RWPE1 (cell line): ENCODE measurements at regions of chr11 and their contacts with region 1.

Region 1: GRCh38 chr11:75422253-75423231 is 10.5 kb downstream of the KLHL35 start:
- DNase-seq: no peak
- H3K27ac ChIP-seq: 0 out of 2 replicates have a peak overlapping the region, but pooled peaks have one; percentile 17
- CTCF ChIP-seq: no peak

Region 2: GRCh38 chr11:75408852-75409219 is 13.7 kb before region 1 on chr11:
- CTCF ChIA-PET with region 1: interaction called, 11 read pairs
- POLR2A ChIA-PET with region 1: no interaction called
- DNase-seq: no peak
- H3K27ac ChIP-seq: peak overlapping the region; percentile 37
- CTCF ChIP-seq: no peak

Region 3: DNA sequence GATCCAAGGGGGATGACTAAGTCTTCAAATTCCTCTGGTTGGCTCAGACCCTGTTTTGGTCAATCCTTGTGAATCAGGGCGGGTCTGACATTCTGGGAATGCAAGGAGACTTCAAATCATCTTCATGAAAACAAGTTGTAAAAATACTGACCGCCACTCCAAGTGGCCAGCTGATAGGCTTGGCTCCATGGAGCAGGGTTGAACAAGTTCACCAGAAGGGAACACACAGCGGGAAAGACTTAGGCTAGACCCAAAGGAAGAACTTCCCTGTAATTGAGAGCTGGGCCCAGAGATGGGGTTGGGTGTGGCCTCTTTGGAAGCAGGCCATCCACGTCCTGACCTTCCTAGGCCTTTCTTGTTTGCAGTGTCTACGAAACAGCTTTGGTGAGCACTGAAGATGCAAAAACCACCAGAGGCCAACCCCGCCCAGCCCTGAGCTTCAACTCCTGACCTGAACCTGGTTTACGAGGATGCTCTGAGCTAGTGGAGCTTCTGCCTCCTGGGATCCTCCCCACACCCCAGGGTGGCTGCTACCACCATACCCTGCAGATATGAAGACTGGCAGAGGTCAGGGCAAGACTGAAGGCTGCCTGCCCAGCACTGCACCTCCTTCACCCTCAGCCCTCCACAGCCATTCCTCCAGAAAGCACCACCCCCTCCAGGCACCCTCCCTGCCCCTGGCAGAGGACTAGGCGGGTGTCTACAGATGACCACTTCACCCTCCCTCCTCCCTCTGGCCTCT is 77.1 kb after region 1 on chr11:
- CTCF ChIA-PET with region 1: no interaction called
- POLR2A ChIA-PET with region 1: no interaction called
- DNase-seq: peak; percentile 89
- H3K27ac ChIP-seq: peak overlapping the region; percentile 80
- CTCF ChIP-seq: no peak